ENCODE measurements at regions of chr13 and their contacts with region 1.

Region 1: DNA sequence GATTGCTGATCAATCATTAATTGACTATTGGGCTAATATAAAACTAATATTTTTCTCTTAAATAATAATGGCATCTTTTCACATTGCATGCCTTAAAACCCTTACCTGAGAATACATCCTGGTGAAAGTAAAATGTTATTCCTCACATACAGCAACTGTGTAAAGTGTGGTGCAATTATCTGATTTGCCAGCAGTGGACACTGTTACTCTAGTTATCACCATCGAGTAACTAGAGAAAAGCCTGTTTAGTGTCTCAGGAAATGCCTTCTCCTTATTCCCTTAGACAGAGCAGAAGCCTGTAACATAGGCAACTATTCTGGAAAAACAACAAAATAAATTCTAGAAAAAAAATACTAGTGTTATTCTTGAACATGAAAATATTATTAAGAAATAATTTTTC is 459.8 kb downstream of the FGF14 start:
- DNase-seq: no peak
- H3K4me3 ChIP-seq: no peak overlapping the region
- H3K27ac ChIP-seq: no peak overlapping the region
- H3K4me1 ChIP-seq: no peaks in the 10 kb centered on the region
- H3K27me3 ChIP-seq: no peaks in the 10 kb centered on the region
- CTCF ChIP-seq: peak in 2 of 3 experiments; percentile 77 to 88; a peak in 3 of 4 replicates
- EP300 ChIP-seq: no peak
- POLR2A ChIP-seq: no peak
- RAD21 ChIP-seq: peak; percentile 94

Region 2: GRCh38 chr13:101785858-101786257 is 156.2 kb before region 1 on chr13:
- CTCF ChIA-PET with region 1: interaction called, 18 read pairs
- POLR2A ChIA-PET with region 1: no interaction called
- DNase-seq: peak; percentile 33 to 47
- H3K4me3 ChIP-seq: no peak overlapping the region
- H3K27ac ChIP-seq: no peak overlapping the region
- H3K4me1 ChIP-seq: no peaks in the 10 kb centered on the region; a peak in 1 of 7 replicates
- H3K27me3 ChIP-seq: no peaks in the 10 kb centered on the region
- CTCF ChIP-seq: peak; percentile 55 to 94 (median 85)
- EP300 ChIP-seq: no peak
- POLR2A ChIP-seq: no peak
- RAD21 ChIP-seq: peak; percentile 92 to 95

Region 3: GRCh38 chr13:101919541-101920181 is 22.4 kb before region 1 on chr13:
- CTCF ChIA-PET with region 1: interaction called, 10 read pairs
- POLR2A ChIA-PET with region 1: no interaction called
- DNase-seq: peak in 1 of 2 experiments; percentile 85
- H3K4me3 ChIP-seq: peak overlapping the region; percentile 2 to 59 (median 28); a peak in 7 of 8 replicates
- H3K27ac ChIP-seq: no peak overlapping the region
- H3K4me1 ChIP-seq: peaks cover 3 to 7% (median 3%) of the 10 kb centered on the region in 4 experiments
- H3K27me3 ChIP-seq: peaks cover 26 to 56% (median 43%) of the 10 kb centered on the region in 4 experiments
- CTCF ChIP-seq: no peak; a peak in 1 of 4 replicates
- EP300 ChIP-seq: no peak
- POLR2A ChIP-seq: no peak
- RAD21 ChIP-seq: peak; percentile 40 to 49; a peak in 2 of 4 replicates

Region 4: GRCh38 chr13:101925731-101926130 is 16.3 kb before region 1 on chr13:
- CTCF ChIA-PET with region 1: interaction called, 13 read pairs
- POLR2A ChIA-PET with region 1: no interaction called
- DNase-seq: no peak
- H3K4me3 ChIP-seq: no peak overlapping the region
- H3K27ac ChIP-seq: no peak overlapping the region
- H3K4me1 ChIP-seq: no peaks in the 10 kb centered on the region
- H3K27me3 ChIP-seq: no peaks in the 10 kb centered on the region
- CTCF ChIP-seq: no peak
- EP300 ChIP-seq: no peak
- POLR2A ChIP-seq: no peak
- RAD21 ChIP-seq: no peak

Region 5: GRCh38 chr13:101982903-101983302 is 40.9 kb after region 1 on chr13:
- CTCF ChIA-PET with region 1: no interaction called
- POLR2A ChIA-PET with region 1: no interaction called
- DNase-seq: no peak
- H3K4me3 ChIP-seq: no peak overlapping the region
- H3K27ac ChIP-seq: no peak overlapping the region
- H3K4me1 ChIP-seq: no peaks in the 10 kb centered on the region
- H3K27me3 ChIP-seq: no peaks in the 10 kb centered on the region; a peak in 1 of 7 replicates
- CTCF ChIP-seq: no peak
- EP300 ChIP-seq: no peak
- POLR2A ChIP-seq: no peak
- RAD21 ChIP-seq: no peak

Region 6: GRCh38 chr13:102012299-102013293 is 70.6 kb after region 1 on chr13:
- CTCF ChIA-PET with region 1: no interaction called
- POLR2A ChIA-PET with region 1: no interaction called
- DNase-seq: no peak
- H3K4me3 ChIP-seq: no peak overlapping the region
- H3K27ac ChIP-seq: no peak overlapping the region
- H3K4me1 ChIP-seq: no peaks in the 10 kb centered on the region
- H3K27me3 ChIP-seq: no peaks in the 10 kb centered on the region
- CTCF ChIP-seq: no peak
- EP300 ChIP-seq: no peak
- POLR2A ChIP-seq: no peak
- RAD21 ChIP-seq: no peak

Region 7: DNA sequence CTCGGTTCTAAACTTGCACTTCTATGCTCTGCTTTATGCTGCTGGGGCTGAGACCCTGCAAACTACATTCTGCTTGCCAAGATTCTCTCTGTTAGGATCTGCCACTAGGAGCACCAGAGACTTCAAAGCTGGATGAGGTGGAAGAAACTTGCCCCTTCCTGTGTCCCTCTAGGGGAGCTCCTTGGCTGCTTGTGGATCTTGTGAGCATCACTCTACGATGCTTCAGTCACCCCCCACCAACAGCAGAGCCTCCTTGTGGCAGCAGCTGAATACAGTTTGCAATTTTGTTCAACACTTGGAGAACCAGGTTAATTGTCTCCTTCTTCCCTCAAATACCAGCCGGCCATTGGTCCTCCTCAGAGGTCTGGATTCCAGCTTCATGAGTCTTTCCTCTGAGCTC is 149.2 kb after region 1 on chr13:
- CTCF ChIA-PET with region 1: interaction called, 13 read pairs
- POLR2A ChIA-PET with region 1: no interaction called
- DNase-seq: peak; percentile 56 to 73
- H3K4me3 ChIP-seq: no peak overlapping the region
- H3K27ac ChIP-seq: no peak overlapping the region
- H3K4me1 ChIP-seq: no peaks in the 10 kb centered on the region
- H3K27me3 ChIP-seq: no peaks in the 10 kb centered on the region
- CTCF ChIP-seq: peak; percentile 43 to 96 (median 84)
- EP300 ChIP-seq: no peak
- POLR2A ChIP-seq: no peak
- RAD21 ChIP-seq: peak; percentile 63 to 68